Activated CD4-positive, alpha-beta T cell treated with anti-CD3 and anti-CD28 coated beads, Interleukin-2, amount 10 ng/mL, durations not matched to agents 24 days and 14 days (primary cell): ENCODE measurements at regions of chr21 and their contacts with region 1.

Region 1: GRCh38 chr21:33976082-33977016 is 60.7 kb upstream of the ATP5PO start:
- DNase-seq: peak; percentile 85
- H3K4me3 Mint-ChIP-seq: peak overlapping the region; percentile 71
- H3K27ac Mint-ChIP-seq: peak overlapping the region; percentile 97
- H3K4me1 Mint-ChIP-seq: peaks cover 72% of the 10 kb centered on the region
- H3K27me3 Mint-ChIP-seq: no peaks in the 10 kb centered on the region

Region 2: DNA sequence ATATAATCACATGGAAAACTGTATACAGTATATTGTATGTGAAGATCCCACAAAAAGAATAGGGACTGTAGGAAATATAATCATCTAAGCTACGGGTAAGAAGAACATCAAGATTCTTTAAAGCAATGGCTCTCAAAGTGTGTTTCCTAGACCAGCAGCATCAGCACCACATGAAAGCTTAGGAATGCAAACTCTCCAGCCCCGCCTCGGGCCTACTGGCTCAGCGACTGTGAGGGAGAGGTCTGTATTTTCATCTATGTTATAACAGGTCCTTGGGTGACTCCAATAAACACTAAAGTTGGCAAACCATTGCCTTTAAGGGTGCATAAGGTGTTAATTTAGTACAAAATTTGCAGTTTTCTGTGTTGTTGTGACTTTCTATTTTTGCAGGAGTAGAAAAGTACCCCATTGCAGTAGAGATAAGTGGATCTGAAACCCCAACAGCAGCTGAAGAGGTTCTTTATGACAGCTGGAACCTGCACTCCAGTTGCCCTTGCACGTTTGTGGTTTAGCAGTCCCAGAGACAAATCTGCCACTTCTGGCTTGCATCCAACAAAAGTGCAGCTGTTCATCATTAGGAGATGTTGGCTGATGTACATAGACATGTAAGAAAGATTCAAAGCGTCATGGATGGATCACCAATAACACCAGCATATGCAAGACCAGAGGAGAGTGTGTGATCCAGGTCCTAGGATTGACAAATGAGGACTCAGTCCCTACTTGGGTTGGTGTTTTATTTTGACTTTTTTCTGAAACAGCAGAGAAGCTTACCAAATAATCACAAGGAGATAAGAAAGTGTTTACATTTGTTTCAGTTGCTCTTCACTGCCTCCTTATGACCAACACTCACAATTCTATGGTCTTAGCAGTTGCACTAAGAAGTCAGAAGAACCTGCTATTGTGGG is 667.5 kb before region 1 on chr21:
- intact Hi-C with region 1: no loop called
- DNase-seq: peak; percentile 51
- H3K4me3 Mint-ChIP-seq: no peak overlapping the region
- H3K27ac Mint-ChIP-seq: no peak overlapping the region
- H3K4me1 Mint-ChIP-seq: peaks cover 5% of the 10 kb centered on the region
- H3K27me3 Mint-ChIP-seq: peaks cover 3% of the 10 kb centered on the region

Region 3: DNA sequence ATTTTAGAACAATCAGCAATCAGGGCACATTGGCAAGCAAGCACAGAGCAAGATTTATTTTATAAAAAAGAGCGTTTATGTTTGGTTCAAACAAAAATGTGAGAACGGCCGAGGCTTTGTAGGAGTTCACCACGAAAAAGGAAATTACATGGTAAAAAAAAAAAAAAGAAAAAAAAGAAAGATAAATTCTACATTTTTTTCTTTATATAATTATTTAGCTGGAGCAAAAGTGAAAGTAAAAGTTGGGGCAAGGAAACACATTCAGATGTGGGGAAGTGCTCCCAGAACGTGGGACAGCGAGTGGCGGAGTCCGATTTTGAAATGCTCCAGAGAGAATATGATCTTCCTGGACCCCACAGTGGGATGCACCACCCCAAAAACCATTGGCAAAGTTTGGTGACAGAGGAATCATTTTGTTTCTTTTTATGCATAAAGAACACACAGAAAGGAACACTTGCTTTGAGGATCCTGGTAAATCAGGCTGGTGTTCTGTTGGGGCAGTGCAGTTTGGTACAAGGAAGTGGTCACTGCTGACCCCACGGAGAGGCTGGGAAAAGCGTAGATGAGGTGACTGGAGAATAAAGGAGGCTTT is 44.5 kb before region 1 on chr21:
- intact Hi-C with region 1: loop called (anchors 2 kb)
- DNase-seq: peak; percentile 80
- H3K4me3 Mint-ChIP-seq: peak overlapping the region; percentile 94
- H3K27ac Mint-ChIP-seq: peak overlapping the region; percentile 99
- H3K4me1 Mint-ChIP-seq: peaks cover 42% of the 10 kb centered on the region
- H3K27me3 Mint-ChIP-seq: no peaks in the 10 kb centered on the region

Region 4: DNA sequence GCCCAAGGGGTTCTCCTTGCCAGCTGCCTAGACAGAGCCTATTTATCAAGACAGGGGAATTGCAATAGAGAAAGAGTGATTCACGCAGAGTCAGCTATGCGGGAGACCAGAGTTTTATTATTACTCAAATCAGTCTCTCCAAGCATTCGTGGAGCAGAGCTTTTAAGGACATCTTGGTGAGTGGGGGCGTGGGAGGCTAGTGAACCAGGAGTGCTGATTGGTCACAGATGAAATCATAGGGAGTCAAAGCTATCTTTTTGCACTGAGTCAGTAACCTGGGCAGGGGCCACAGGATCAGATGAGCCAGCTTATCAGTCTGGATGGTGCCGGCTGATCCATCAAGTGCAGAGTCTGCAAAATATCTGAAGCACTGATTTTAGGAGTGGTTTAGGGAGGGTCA is 32.3 kb after region 1 on chr21:
- intact Hi-C with region 1: loop called (anchors 1 kb)
- DNase-seq: no peak
- H3K4me3 Mint-ChIP-seq: no peak overlapping the region
- H3K27ac Mint-ChIP-seq: no peak overlapping the region
- H3K4me1 Mint-ChIP-seq: peaks cover 14% of the 10 kb centered on the region
- H3K27me3 Mint-ChIP-seq: no peaks in the 10 kb centered on the region

Region 5: GRCh38 chr21:34073870-34074781 is 97.8 kb after region 1 on chr21:
- intact Hi-C with region 1: loop called (anchors 1 kb)
- DNase-seq: peak; percentile 87
- H3K4me3 Mint-ChIP-seq: peak overlapping the region; percentile 96
- H3K27ac Mint-ChIP-seq: peak overlapping the region; percentile 93
- H3K4me1 Mint-ChIP-seq: peaks cover 48% of the 10 kb centered on the region
- H3K27me3 Mint-ChIP-seq: no peaks in the 10 kb centered on the region